ENCODE measurements at regions of chr3 and their contacts with region 1.

Region 1: DNA sequence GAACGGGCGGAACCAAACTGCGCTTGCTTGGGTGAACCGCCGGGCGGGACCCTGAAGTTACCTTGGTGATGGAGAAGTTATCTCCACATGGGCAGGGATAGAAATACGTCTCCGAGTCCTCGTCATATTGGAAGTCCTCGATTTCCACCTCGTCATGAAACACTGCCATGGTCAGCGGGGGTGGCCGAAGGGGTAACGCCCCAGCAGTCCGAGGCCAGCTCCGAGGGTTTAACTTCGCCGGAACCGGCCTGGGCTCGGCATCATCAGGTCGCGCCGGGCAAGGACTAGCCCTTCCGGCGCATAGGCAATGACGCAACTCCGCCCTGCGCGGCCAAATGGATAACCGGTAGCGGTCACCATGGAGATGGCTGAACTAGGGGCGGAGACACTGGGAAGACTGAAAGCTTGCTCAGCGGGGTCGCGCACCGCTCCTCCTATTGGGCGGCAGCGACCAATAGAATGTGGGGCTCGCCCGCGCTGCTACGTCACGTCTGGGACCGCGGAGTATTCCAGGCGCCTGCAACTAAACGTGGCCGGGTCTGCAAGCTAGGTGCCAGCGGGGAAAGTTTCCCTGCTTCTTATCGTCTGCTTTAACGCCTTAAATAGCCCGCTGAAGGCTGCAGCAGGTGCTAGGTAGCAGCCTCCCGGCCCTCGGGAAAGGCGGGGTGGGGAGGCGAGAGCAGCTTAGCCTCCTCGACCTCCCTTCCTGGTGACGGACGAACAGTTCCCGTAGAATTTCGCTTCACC is at the starts of genes DPH3 and OXNAD1:
- DNase-seq: peak; percentile 97 to 99 (median 98)
- ATAC-seq: peak; percentile 96
- H3K4me3 ChIP-seq: peak within 1 kb of the TSS; percentile 85
- H3K4me3 Mint-ChIP-seq: peak within 1 kb of the TSS; percentile 85 to 100 (median 98)
- H3K27ac ChIP-seq: peak within 1 kb of the TSS; percentile 88
- H3K27ac Mint-ChIP-seq: peak within 1 kb of the TSS; percentile 96 to 100 (median 98)
- H3K4me1 ChIP-seq: peaks cover 13 to 28% of the 10 kb centered on the region in 2 donors
- H3K4me1 Mint-ChIP-seq: peaks cover 13 to 50% (median 43%) of the 10 kb centered on the region in 7 donors
- H3K27me3 ChIP-seq: no peaks in the 10 kb centered on the region
- H3K27me3 Mint-ChIP-seq: peaks cover 0 to 2% (median 0%) of the 10 kb centered on the region in 5 donors
- total RNA-seq, gene DPH3: 12.4 to 23.6 (median 15.7) TPM
- total RNA-seq, gene OXNAD1: 80.3 to 171 (median 152) TPM

Region 2: GRCh38 chr3:15427182-15427880 is 837.5 kb before region 1 on chr3 and contains the starts of genes EAF1 and METTL6:
- CTCF ChIA-PET with region 1: no interaction called
- POLR2A ChIA-PET with region 1: no interaction called
- intact Hi-C with region 1: loop called in 1 of 2 experiments (anchors 10 kb)
- DNase-seq: peak; percentile 71 to 85 (median 84)
- ATAC-seq: peak; percentile 89
- H3K4me3 ChIP-seq: peak within 1 kb of the TSS; percentile 81
- H3K4me3 Mint-ChIP-seq: peak within 1 kb of the TSS; percentile 91 to 100 (median 98)
- H3K27ac ChIP-seq: peak within 1 kb of the TSS; percentile 91
- H3K27ac Mint-ChIP-seq: peak within 1 kb of the TSS; percentile 86 to 99 (median 94)
- H3K4me1 ChIP-seq: peaks cover 18 to 23% of the 10 kb centered on the region in 2 donors
- H3K4me1 Mint-ChIP-seq: peaks cover 47 to 82% (median 62%) of the 10 kb centered on the region in 7 donors
- H3K27me3 ChIP-seq: no peaks in the 10 kb centered on the region
- H3K27me3 Mint-ChIP-seq: no peaks in the 10 kb centered on the region
- total RNA-seq, gene EAF1: 17.8 to 61.9 (median 27.8) TPM
- total RNA-seq, gene METTL6: 7.9 to 23.0 (median 18.3) TPM

Region 3: GRCh38 chr3:16300881-16301359 is 36.0 kb after region 1 on chr3:
- CTCF ChIA-PET with region 1: no interaction called
- POLR2A ChIA-PET with region 1: interaction called, 36 read pairs
- intact Hi-C with region 1: loop called in 1 of 2 experiments (anchors 1 kb)
- DNase-seq: peak in 7 of 9 donors; percentile 68 to 86 (median 82)
- ATAC-seq: peak; percentile 86
- H3K4me3 ChIP-seq: peak overlapping the region; percentile 48
- H3K4me3 Mint-ChIP-seq: peak overlapping the region; percentile 78 to 96 (median 92)
- H3K27ac ChIP-seq: peak overlapping the region; percentile 66
- H3K27ac Mint-ChIP-seq: peak overlapping the region; percentile 86 to 98 (median 94)
- H3K4me1 ChIP-seq: peaks cover 78 to 95% of the 10 kb centered on the region in 2 donors
- H3K4me1 Mint-ChIP-seq: peaks cover 61 to 99% (median 96%) of the 10 kb centered on the region in 7 donors
- H3K27me3 ChIP-seq: no peaks in the 10 kb centered on the region
- H3K27me3 Mint-ChIP-seq: no peaks in the 10 kb centered on the region

Region 4: GRCh38 chr3:16511681-16512434 is 247.0 kb after region 1 on chr3:
- CTCF ChIA-PET with region 1: interaction called, 3 read pairs
- POLR2A ChIA-PET with region 1: interaction called, 4 read pairs
- intact Hi-C with region 1: loop called (anchors 1 kb)
- DNase-seq: peak; percentile 43 to 90 (median 86)
- ATAC-seq: peak; percentile 86
- H3K4me3 ChIP-seq: peak overlapping the region; percentile 79
- H3K4me3 Mint-ChIP-seq: peak overlapping the region; percentile 82 to 98 (median 94)
- H3K27ac ChIP-seq: peak overlapping the region; percentile 88
- H3K27ac Mint-ChIP-seq: peak overlapping the region; percentile 87 to 99 (median 95)
- H3K4me1 ChIP-seq: peaks cover 56 to 71% of the 10 kb centered on the region in 2 donors
- H3K4me1 Mint-ChIP-seq: peaks cover 62 to 85% (median 75%) of the 10 kb centered on the region in 7 donors
- H3K27me3 ChIP-seq: no peaks in the 10 kb centered on the region
- H3K27me3 Mint-ChIP-seq: no peaks in the 10 kb centered on the region

Region 5: DNA sequence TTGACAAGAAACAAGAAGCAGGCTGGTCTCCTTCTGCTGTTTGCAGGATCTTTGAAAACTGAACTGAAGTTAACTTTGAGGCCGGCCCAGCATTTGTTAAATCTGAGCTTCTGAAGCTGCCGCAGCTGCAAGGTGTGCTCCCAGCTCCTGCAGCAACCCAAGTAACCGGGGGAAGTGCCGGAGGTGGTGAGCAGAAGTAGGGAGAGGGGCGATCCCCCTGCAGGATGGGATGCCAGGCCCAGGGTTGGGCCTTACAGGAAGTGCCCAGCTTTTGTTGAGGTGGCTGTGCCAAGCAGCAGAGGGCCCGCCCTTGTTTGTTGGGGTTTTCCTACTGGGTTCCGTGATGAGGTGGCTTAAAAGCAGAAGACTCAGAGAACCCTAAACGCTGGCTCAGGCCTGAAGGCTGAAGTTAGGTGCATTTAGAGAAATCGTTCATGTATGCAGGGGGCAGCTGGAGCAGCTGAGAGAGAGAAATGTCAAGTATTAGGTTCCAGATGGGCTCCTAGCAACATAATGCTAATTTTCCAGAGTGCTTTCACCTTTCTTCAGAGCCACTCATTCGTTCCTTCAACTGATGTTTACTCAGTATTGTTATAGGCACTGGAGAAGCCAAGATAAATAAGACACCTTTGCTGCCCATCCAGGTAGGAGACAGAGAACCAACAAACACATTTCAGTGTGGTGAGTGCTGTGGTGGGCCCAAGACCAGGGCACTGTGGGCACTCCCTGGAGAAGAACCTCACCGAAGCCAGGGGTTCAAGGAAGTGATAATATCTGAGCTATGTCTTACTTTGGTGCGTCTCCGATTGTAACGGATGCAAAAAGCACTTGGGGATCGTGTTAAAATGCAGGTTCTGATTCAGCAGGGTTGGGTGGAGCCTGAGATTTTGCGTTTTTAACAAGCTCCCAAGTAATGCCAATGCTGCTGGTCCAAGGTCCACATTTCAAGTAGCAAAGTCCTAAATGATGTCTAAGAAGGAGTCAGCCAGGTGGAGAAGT is 577.7 kb after region 1 on chr3:
- CTCF ChIA-PET with region 1: no interaction called
- POLR2A ChIA-PET with region 1: no interaction called
- intact Hi-C with region 1: loop called in 1 of 2 experiments (anchors 2 kb)
- DNase-seq: peak; percentile 49 to 85 (median 78)
- ATAC-seq: peak; percentile 95
- H3K4me3 ChIP-seq: peak overlapping the region; percentile 61
- H3K4me3 Mint-ChIP-seq: peak overlapping the region; percentile 78 to 93 (median 87)
- H3K27ac ChIP-seq: peak overlapping the region; percentile 76
- H3K27ac Mint-ChIP-seq: peak overlapping the region; percentile 92 to 99 (median 98)
- H3K4me1 ChIP-seq: peaks cover 49 to 51% of the 10 kb centered on the region in 2 donors
- H3K4me1 Mint-ChIP-seq: peaks cover 34 to 96% (median 90%) of the 10 kb centered on the region in 7 donors
- H3K27me3 ChIP-seq: no peaks in the 10 kb centered on the region
- H3K27me3 Mint-ChIP-seq: peaks cover 0 to 6% (median 0%) of the 10 kb centered on the region in 5 donors

Region 6: DNA sequence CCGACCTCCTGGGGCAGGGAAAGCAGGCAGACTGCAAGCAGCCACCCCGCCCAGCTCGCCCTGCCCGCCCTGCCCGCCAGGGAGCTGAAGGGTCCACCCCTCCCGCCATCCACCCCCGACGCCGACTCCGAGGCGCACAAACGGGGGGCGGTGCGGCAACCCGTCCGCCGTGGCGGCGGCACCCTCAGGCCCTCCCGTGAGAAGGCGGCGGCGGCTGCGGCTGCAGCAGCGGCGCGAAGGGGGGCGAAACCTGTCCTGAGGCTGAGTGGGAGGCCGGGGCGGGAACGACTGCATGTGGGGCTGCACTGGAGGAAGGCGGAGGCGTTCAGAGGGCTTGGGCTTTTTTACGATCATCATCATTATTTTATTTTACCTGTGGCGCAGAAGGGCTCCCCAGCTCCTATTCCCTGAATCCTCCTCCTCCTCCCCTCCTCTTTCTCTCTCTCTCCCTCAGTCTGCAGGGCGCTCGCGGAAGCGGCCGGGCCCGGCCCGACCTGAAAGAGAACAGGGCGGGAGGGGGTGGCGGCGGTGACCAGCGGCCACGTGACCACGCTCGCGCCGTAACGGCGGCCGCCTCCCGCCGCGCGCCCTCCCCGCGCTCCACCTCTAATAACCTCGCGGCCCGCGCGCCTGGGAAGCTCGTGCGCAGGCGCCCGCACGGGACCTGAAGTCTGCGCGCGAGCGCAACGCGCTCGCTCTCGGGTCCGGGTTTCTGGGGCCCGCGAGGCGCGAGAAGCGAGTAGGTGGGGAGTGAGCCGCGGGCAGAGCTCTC is 1477.4 kb after region 1 on chr3 and contains the start of gene TBC1D5:
- CTCF ChIA-PET with region 1: no interaction called
- POLR2A ChIA-PET with region 1: no interaction called
- intact Hi-C with region 1: loop called (anchors 2 to 10 kb)
- DNase-seq: peak; percentile 77 to 91 (median 84)
- ATAC-seq: peak; percentile 95
- H3K4me3 ChIP-seq: peak within 1 kb of the TSS; percentile 72
- H3K4me3 Mint-ChIP-seq: peak within 1 kb of the TSS; percentile 79 to 96 (median 92)
- H3K27ac ChIP-seq: peak within 1 kb of the TSS; percentile 71
- H3K27ac Mint-ChIP-seq: peak within 1 kb of the TSS; percentile 74 to 96 (median 88)
- H3K4me1 ChIP-seq: peaks cover 6 to 8% of the 10 kb centered on the region in 2 donors
- H3K4me1 Mint-ChIP-seq: peaks cover 17 to 49% (median 39%) of the 10 kb centered on the region in 7 donors
- H3K27me3 ChIP-seq: no peaks in the 10 kb centered on the region
- H3K27me3 Mint-ChIP-seq: no peaks in the 10 kb centered on the region
- total RNA-seq, gene TBC1D5: 30.5 to 54.0 (median 40.3) TPM

Measured in naive thymus-derived CD4-positive, alpha-beta T cell (primary cell).